ENCODE measurements at regions of chr1 and their contacts with region 1.

Region 1: GRCh38 chr1:53393325-53393792 is 65.5 kb upstream of the LRP8 start:
- DNase-seq: peak; percentile 61
- H3K4me3 Mint-ChIP-seq: no peak overlapping the region
- H3K27ac Mint-ChIP-seq: no peak overlapping the region
- H3K4me1 Mint-ChIP-seq: peaks cover 21% of the 10 kb centered on the region
- H3K27me3 Mint-ChIP-seq: peaks cover 2% of the 10 kb centered on the region

Region 2: DNA sequence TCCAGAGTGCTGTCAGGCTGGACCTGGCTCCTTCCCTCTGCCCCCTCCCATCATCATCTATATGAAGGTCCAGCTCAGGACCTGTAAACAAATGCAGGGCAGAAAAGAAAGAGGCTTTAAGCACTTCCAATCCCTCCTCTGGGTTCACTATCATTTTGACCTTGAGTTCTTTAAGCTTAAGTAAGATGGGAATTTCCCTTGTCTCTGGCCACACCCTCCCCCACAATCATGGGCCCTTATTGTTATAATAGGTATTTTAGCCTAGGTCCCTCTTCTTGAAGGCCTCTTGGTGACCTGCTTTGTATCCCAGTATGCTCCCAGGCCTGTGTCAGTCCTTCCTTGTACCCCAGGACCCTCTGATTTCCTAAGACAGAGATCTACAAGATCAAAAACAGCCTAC is 1829.2 kb before region 1 on chr1:
- intact Hi-C with region 1: loop called (anchors 5 kb)
- DNase-seq: peak; percentile 31
- H3K4me3 Mint-ChIP-seq: peak overlapping the region; percentile 41
- H3K27ac Mint-ChIP-seq: no peak overlapping the region
- H3K4me1 Mint-ChIP-seq: peaks cover 4% of the 10 kb centered on the region
- H3K27me3 Mint-ChIP-seq: no peaks in the 10 kb centered on the region

Region 3: DNA sequence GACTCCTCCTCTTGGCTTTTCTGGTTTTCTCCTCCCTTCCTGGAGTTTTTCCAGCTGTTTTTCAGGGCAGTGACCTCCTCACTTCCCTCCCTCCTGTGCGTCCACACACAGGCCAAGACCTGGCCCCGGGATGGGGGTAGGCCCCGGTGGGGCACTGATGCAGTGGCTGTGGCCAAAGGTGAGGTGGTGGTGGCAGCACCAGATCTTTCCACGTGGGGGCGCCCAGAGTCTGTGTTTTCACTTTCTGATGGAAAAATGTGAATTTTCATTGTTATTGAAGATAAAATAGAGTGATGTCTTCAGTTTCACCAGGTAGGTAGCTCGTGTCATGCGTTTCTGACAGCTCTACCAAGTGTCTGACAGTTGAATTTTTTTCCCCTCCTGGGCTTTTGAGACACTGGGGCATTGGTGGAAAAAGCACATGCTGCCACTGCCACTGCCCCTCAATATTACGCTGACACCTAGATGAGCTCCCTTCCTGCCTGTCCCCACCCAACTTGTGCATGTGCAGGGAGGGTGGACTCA is 115.1 kb before region 1 on chr1:
- intact Hi-C with region 1: loop called (anchors 1 kb)
- DNase-seq: peak; percentile 59
- H3K4me3 Mint-ChIP-seq: no peak overlapping the region
- H3K27ac Mint-ChIP-seq: no peak overlapping the region
- H3K4me1 Mint-ChIP-seq: no peaks in the 10 kb centered on the region
- H3K27me3 Mint-ChIP-seq: no peaks in the 10 kb centered on the region

Region 4: GRCh38 chr1:53294567-53294966 is 98.8 kb before region 1 on chr1:
- intact Hi-C with region 1: loop called (anchors 5 kb)
- DNase-seq: peak; percentile 48
- H3K4me3 Mint-ChIP-seq: peak overlapping the region; percentile 21
- H3K27ac Mint-ChIP-seq: peak overlapping the region; percentile 70
- H3K4me1 Mint-ChIP-seq: peaks cover 40% of the 10 kb centered on the region
- H3K27me3 Mint-ChIP-seq: no peaks in the 10 kb centered on the region

Region 5: GRCh38 chr1:53473463-53473862 is 80.1 kb after region 1 on chr1:
- intact Hi-C with region 1: no loop called
- DNase-seq: no peak
- H3K4me3 Mint-ChIP-seq: no peak overlapping the region
- H3K27ac Mint-ChIP-seq: no peak overlapping the region
- H3K4me1 Mint-ChIP-seq: no peaks in the 10 kb centered on the region
- H3K27me3 Mint-ChIP-seq: peaks cover 3% of the 10 kb centered on the region